ENCODE measurements at regions of chr6 and their contacts with region 1.

Region 1: DNA sequence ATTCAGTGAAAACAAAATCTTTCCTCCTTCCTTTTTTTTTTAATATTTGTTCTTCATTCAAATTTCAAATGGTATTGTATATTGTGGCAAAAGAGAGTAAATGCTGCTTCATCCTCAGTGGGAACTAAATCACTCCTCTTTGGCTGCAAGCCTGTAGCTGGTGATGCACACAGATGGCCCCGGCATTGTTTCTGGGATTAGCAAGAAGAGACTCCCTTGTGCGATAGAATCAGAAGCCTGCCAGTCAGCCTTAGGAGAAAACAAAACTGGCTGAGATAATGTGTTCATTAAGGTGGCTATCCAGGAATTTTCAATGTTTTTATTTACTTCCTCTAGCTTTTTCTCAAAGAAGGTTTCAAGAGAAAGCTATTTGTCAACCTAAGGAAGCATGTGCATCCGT is 20.7 kb upstream of the ELOVL2 start:
- DNase-seq: no peak
- H3K4me3 Mint-ChIP-seq: no peak overlapping the region
- H3K27ac Mint-ChIP-seq: no peak overlapping the region
- H3K4me1 Mint-ChIP-seq: no peaks in the 10 kb centered on the region
- H3K27me3 Mint-ChIP-seq: peaks cover 10% of the 10 kb centered on the region

Region 2: GRCh38 chr6:10478187-10479040 is 586.4 kb before region 1 on chr6:
- intact Hi-C with region 1: loop called (anchors 2 kb)
- DNase-seq: peak; percentile 72
- H3K4me3 Mint-ChIP-seq: no peak overlapping the region
- H3K27ac Mint-ChIP-seq: no peak overlapping the region
- H3K4me1 Mint-ChIP-seq: peaks cover 3% of the 10 kb centered on the region
- H3K27me3 Mint-ChIP-seq: peaks cover 8% of the 10 kb centered on the region

Region 3: DNA sequence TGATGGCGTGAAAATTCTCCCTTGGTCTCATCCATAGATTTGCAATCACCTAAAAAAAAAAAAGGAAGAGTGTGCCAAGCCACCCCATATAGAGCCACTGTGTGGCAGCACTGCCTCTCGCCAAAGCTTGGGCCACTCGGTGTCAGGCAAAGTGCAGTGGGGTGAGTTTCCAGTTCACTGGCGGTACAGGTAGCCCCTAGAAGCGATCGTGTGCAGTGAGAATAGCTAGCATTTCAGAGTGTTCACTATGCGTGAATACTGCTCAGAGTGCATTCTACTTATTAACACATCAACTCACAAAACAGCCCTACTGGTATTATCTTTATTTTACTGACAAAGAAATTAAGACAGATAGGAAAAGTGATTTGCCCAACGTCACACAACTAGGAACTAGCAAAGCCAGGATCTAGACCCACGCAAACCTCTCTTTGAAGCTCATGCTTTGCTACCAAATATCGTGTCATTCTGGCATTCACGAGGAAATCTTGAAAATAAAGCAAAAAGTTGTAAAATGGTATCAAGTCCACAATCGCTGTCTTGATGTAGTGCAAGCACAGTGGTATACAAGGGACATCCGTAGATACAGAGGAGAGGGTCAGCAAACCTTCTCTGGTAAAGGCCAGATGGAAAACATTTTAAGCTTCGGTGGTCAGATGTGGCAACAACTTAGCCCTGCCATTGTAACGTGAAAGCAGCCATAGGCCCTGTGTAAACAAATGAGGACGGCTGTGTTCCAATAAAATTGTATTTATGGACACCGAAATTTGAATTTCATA is 554.1 kb before region 1 on chr6:
- intact Hi-C with region 1: loop called (anchors 10 kb)
- DNase-seq: peak; percentile 87
- H3K4me3 Mint-ChIP-seq: no peak overlapping the region
- H3K27ac Mint-ChIP-seq: no peak overlapping the region
- H3K4me1 Mint-ChIP-seq: peaks cover 6% of the 10 kb centered on the region
- H3K27me3 Mint-ChIP-seq: peaks cover 7% of the 10 kb centered on the region

Region 4: GRCh38 chr6:10954590-10955010 is 110.2 kb before region 1 on chr6:
- intact Hi-C with region 1: loop called (anchors 2 kb)
- DNase-seq: peak; percentile 90
- H3K4me3 Mint-ChIP-seq: no peak overlapping the region
- H3K27ac Mint-ChIP-seq: no peak overlapping the region
- H3K4me1 Mint-ChIP-seq: no peaks in the 10 kb centered on the region
- H3K27me3 Mint-ChIP-seq: peaks cover 11% of the 10 kb centered on the region

Region 5: GRCh38 chr6:10968776-10969175 is 96.1 kb before region 1 on chr6:
- intact Hi-C with region 1: no loop called
- DNase-seq: peak; percentile 27
- H3K4me3 Mint-ChIP-seq: no peak overlapping the region
- H3K27ac Mint-ChIP-seq: no peak overlapping the region
- H3K4me1 Mint-ChIP-seq: no peaks in the 10 kb centered on the region
- H3K27me3 Mint-ChIP-seq: peaks cover 10% of the 10 kb centered on the region

Region 6: GRCh38 chr6:11414176-11414963 is 349.5 kb after region 1 on chr6:
- intact Hi-C with region 1: no loop called
- DNase-seq: peak; percentile 78
- H3K4me3 Mint-ChIP-seq: no peak overlapping the region
- H3K27ac Mint-ChIP-seq: peak overlapping the region; percentile 41
- H3K4me1 Mint-ChIP-seq: peaks cover 44% of the 10 kb centered on the region
- H3K27me3 Mint-ChIP-seq: no peaks in the 10 kb centered on the region